A549 (cell line): ENCODE measurements at regions of chr11 and their contacts with region 1.

Region 1: GRCh38 chr11:74739546-74740270 is 8.5 kb upstream of the CHRDL2 start:
- DNase-seq: peak; percentile 74 to 87
- ATAC-seq: peak; percentile 96 to 97
- H3K4me3 ChIP-seq: no peak overlapping the region
- H3K27ac ChIP-seq: peak overlapping the region in 1 of 2 experiments; percentile 16; a peak in 1 of 6 replicates
- H3K4me1 ChIP-seq: 0 out of 3 replicates have a peak, but pooled peaks cover 4% of the 10 kb centered on the region
- CTCF ChIP-seq: peak; percentile 94
- EP300 ChIP-seq: no peak
- POLR2A ChIP-seq: no peak
- RAD21 ChIP-seq: peak; percentile 86 to 88

Region 2: DNA sequence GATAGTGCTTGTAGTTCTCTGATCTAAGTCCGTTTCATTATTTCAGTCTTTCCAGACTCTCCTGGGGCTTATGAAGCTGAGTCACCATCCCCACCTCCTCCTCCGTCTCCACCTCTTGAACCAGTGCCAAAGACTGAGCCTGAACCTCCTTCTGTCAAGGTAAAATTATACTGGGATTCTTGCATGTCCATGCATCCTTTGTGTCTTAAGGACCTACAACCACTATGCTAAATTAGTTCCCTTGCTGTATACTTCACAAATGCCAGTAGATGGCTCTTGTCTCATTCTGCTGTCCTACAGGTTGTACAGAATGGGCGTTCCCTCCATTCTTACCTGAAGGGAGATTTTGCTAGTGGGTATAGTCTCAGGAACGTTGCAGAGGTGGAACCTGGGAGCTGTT is 105.2 kb before region 1 on chr11:
- CTCF ChIA-PET with region 1: interaction called, 27 read pairs
- POLR2A ChIA-PET with region 1: interaction called, 4 read pairs
- DNase-seq: peak; percentile 33 to 80
- ATAC-seq: peak; percentile 93 to 94
- H3K4me3 ChIP-seq: no peak overlapping the region
- H3K27ac ChIP-seq: peak overlapping the region; percentile 61 to 63
- H3K4me1 ChIP-seq: peaks cover 52% of the 10 kb centered on the region
- CTCF ChIP-seq: peak; percentile 61
- EP300 ChIP-seq: no peak
- POLR2A ChIP-seq: no peak
- RAD21 ChIP-seq: peak; percentile 69

Region 3: GRCh38 chr11:74672956-74673692 is 66.6 kb before region 1 on chr11:
- CTCF ChIA-PET with region 1: interaction called, 17 read pairs
- POLR2A ChIA-PET with region 1: no interaction called
- DNase-seq: peak; percentile 86 to 98
- ATAC-seq: peak; percentile 90 to 91
- H3K4me3 ChIP-seq: no peak overlapping the region
- H3K27ac ChIP-seq: peak overlapping the region; percentile 98 to 100
- H3K4me1 ChIP-seq: peaks cover 45% of the 10 kb centered on the region
- CTCF ChIP-seq: no peak
- EP300 ChIP-seq: peak; percentile 90 to 97
- POLR2A ChIP-seq: no peak
- RAD21 ChIP-seq: peak in 1 of 2 experiments; percentile 42; a peak in 4 of 5 replicates

Region 4: GRCh38 chr11:74710281-74710938 is 29.3 kb before region 1 on chr11:
- CTCF ChIA-PET with region 1: interaction called, 19 read pairs
- POLR2A ChIA-PET with region 1: no interaction called
- DNase-seq: no peak
- ATAC-seq: peak in 1 of 2 experiments; percentile 34; a peak in 2 of 6 replicates
- H3K4me3 ChIP-seq: no peak overlapping the region
- H3K27ac ChIP-seq: peak overlapping the region in 1 of 2 experiments; percentile 57; a peak in 2 of 6 replicates
- H3K4me1 ChIP-seq: peaks cover 9% of the 10 kb centered on the region; the same call in 2 of the 3 replicates
- CTCF ChIP-seq: no peak
- EP300 ChIP-seq: no peak
- POLR2A ChIP-seq: no peak
- RAD21 ChIP-seq: no peak

Region 5: GRCh38 chr11:74754507-74755255 is 15.0 kb after region 1 on chr11:
- CTCF ChIA-PET with region 1: interaction called, 21 read pairs
- POLR2A ChIA-PET with region 1: no interaction called
- DNase-seq: peak; percentile 38 to 39
- ATAC-seq: peak; percentile 86 to 90
- H3K4me3 ChIP-seq: peak overlapping the region; percentile 30
- H3K27ac ChIP-seq: peak overlapping the region; percentile 60 to 78
- H3K4me1 ChIP-seq: peaks cover 52% of the 10 kb centered on the region
- CTCF ChIP-seq: no peak
- EP300 ChIP-seq: no peak
- POLR2A ChIP-seq: no peak
- RAD21 ChIP-seq: no peak